A673 (cell line): ENCODE measurements at regions of chr1 and their contacts with region 1.

Region 1: DNA sequence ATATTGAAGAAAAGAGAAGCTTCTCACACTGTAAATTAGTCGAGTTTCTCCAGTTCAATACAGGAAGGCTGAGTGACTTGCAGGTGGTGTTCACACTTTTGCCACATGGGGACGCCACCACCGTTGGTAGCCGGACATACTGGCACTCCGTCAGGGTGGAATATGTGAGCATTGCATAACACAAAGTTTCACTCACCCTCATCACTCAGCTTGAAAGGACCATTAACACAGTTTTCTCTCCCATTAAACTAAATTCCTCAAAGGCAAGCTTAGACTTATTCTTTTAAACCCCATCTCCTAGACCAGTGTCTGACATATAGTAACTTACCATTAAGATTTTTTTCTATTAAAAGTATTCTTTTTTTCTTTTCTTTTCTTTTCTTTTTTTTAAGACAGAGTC is 105.3 kb upstream of the SERBP1 start:
- DNase-seq: peak; percentile 82
- H3K4me3 ChIP-seq: no peak overlapping the region
- H3K27ac ChIP-seq: no peak overlapping the region
- H3K4me1 ChIP-seq: no peaks in the 10 kb centered on the region
- H3K27me3 ChIP-seq: no peaks in the 10 kb centered on the region
- CTCF ChIP-seq: peak; percentile 96

Region 2: DNA sequence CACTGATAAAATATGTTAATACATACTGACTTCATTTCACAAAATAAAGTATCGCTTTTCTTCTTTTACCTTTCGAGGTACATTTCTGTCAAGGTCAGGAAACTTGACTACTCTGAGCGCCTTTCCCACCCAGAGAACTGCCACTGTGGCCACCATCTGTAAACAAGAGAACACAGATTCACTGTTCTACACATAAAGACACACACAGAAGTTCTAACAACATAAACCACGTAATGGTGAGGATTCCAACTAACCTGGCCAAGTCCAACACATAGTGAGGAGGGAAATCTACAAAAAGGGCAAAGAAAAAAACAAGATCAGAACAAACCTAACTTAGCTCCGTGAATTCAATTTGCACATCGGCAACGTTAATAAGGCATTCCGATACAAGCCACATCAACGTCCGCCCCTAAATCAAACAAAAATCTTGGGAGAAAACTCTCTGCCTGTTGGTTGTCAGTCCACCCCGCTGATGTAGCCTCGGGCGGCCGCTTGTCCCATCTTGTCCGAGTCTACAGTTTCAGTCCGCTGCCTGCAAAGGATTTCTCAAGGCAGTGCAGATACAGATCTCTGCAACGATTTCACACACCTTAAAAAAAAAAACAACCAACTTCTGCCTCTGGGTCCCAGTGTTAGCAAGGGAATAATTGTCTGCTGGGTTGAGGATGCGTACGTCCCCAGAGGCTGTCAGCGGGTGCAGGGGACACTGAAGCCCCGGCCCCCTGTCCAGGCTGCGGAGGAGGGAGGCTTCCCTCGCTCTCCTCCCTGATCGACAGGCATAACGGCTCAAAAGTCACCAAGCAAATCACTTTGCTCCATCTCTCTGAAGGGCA is 482.6 kb before region 1 on chr1:
- CTCF ChIA-PET with region 1: no interaction called
- POLR2A ChIA-PET with region 1: no interaction called
- intact Hi-C with region 1: no loop called
- DNase-seq: peak; percentile 28
- H3K4me3 ChIP-seq: peak overlapping the region; percentile 95
- H3K27ac ChIP-seq: peak overlapping the region; percentile 85
- H3K4me1 ChIP-seq: peaks cover 6% of the 10 kb centered on the region
- H3K27me3 ChIP-seq: no peaks in the 10 kb centered on the region
- CTCF ChIP-seq: no peak

Region 3: GRCh38 chr1:67552336-67552759 is 16.9 kb after region 1 on chr1:
- CTCF ChIA-PET with region 1: interaction called, 12 read pairs
- POLR2A ChIA-PET with region 1: no interaction called
- intact Hi-C with region 1: no loop called
- DNase-seq: no peak
- H3K4me3 ChIP-seq: no peak overlapping the region
- H3K27ac ChIP-seq: no peak overlapping the region
- H3K4me1 ChIP-seq: no peaks in the 10 kb centered on the region
- H3K27me3 ChIP-seq: no peaks in the 10 kb centered on the region
- CTCF ChIP-seq: no peak

Region 4: GRCh38 chr1:67760030-67760821 is 224.8 kb after region 1 on chr1:
- CTCF ChIA-PET with region 1: interaction called, 20 read pairs
- POLR2A ChIA-PET with region 1: no interaction called
- intact Hi-C with region 1: loop called (anchors 1 kb)
- DNase-seq: peak; percentile 70
- H3K4me3 ChIP-seq: no peak overlapping the region
- H3K27ac ChIP-seq: no peak overlapping the region
- H3K4me1 ChIP-seq: no peaks in the 10 kb centered on the region
- H3K27me3 ChIP-seq: no peaks in the 10 kb centered on the region
- CTCF ChIP-seq: peak; percentile 92

Region 5: GRCh38 chr1:67853704-67854103 is 318.2 kb after region 1 on chr1:
- CTCF ChIA-PET with region 1: no interaction called
- POLR2A ChIA-PET with region 1: no interaction called
- intact Hi-C with region 1: loop called (anchors 5 kb)
- DNase-seq: peak; percentile 83
- H3K4me3 ChIP-seq: no peak overlapping the region
- H3K27ac ChIP-seq: no peak overlapping the region
- H3K4me1 ChIP-seq: no peaks in the 10 kb centered on the region
- H3K27me3 ChIP-seq: no peaks in the 10 kb centered on the region
- CTCF ChIP-seq: peak; percentile 77

Region 6: GRCh38 chr1:68346188-68346808 is 810.8 kb after region 1 on chr1:
- CTCF ChIA-PET with region 1: no interaction called
- POLR2A ChIA-PET with region 1: no interaction called
- intact Hi-C with region 1: loop called (anchors 10 kb)
- DNase-seq: peak; percentile 70
- H3K4me3 ChIP-seq: no peak overlapping the region
- H3K27ac ChIP-seq: no peak overlapping the region
- H3K4me1 ChIP-seq: no peaks in the 10 kb centered on the region
- H3K27me3 ChIP-seq: no peaks in the 10 kb centered on the region
- CTCF ChIP-seq: peak; percentile 63